Heart right ventricle (tissue), 16 donors: ENCODE measurements at regions of chr16 and their contacts with region 1.

Region 1: GRCh38 chr16:88442727-88443576 is 10.1 kb upstream of the ZFPM1 start:
- DNase-seq: peak; percentile 74 to 80
- ATAC-seq: peak; percentile 82 to 92 (median 88)
- H3K4me3 ChIP-seq: no peak overlapping the region
- H3K27ac ChIP-seq: no peak overlapping the region
- H3K4me1 ChIP-seq: peaks cover 0 to 10% (median 6%) of the 10 kb centered on the region in 9 donors
- H3K27me3 ChIP-seq: peaks cover 0 to 14% (median 7%) of the 10 kb centered on the region in 7 donors
- CTCF ChIP-seq: peak; percentile 95 to 99 (median 97)

Region 2: GRCh38 chr16:88527186-88527936 is 84.4 kb after region 1 on chr16:
- intact Hi-C with region 1: loop called (anchors 1 to 2 kb)
- DNase-seq: peak; percentile 55 to 67
- ATAC-seq: peak; percentile 40 to 76 (median 71)
- H3K4me3 ChIP-seq: no peak overlapping the region
- H3K27ac ChIP-seq: no peak overlapping the region
- H3K4me1 ChIP-seq: peaks cover 0 to 37% (median 24%) of the 10 kb centered on the region in 9 donors
- H3K27me3 ChIP-seq: peaks cover 0 to 7% (median 0%) of the 10 kb centered on the region in 7 donors
- CTCF ChIP-seq: peak; percentile 84 to 96 (median 91)

Region 3: GRCh38 chr16:88561485-88562369 is 118.8 kb after region 1 on chr16:
- intact Hi-C with region 1: loop called in 8 of 10 experiments (anchors 2 to 10 kb)
- DNase-seq: peak; percentile 34 to 36
- ATAC-seq: peak; percentile 18 to 62 (median 42)
- H3K4me3 ChIP-seq: peak overlapping the region in 6 of 10 donors; percentile 14 to 38 (median 34)
- H3K27ac ChIP-seq: no peak overlapping the region
- H3K4me1 ChIP-seq: peaks cover 0 to 16% (median 8%) of the 10 kb centered on the region in 9 donors
- H3K27me3 ChIP-seq: peaks cover 0 to 20% (median 15%) of the 10 kb centered on the region in 7 donors
- CTCF ChIP-seq: peak; percentile 49 to 72 (median 63)

Region 4: GRCh38 chr16:88737298-88738150 is 294.6 kb after region 1 on chr16:
- intact Hi-C with region 1: no loop called
- DNase-seq: peak; percentile 42 to 76
- ATAC-seq: peak; percentile 65 to 83 (median 76)
- H3K4me3 ChIP-seq: no peak overlapping the region
- H3K27ac ChIP-seq: no peak overlapping the region
- H3K4me1 ChIP-seq: peaks cover 0 to 10% (median 4%) of the 10 kb centered on the region in 9 donors
- H3K27me3 ChIP-seq: no peaks in the 10 kb centered on the region
- CTCF ChIP-seq: peak; percentile 95 to 99 (median 98)